Activated T-helper 2 cell treated with anti-CD3 and anti-CD28 coated beads, Interferon-gamma antibody, Interleukin-2, Interleukin-4, amounts not matched to agents 10 μg/mL and 5 μg/mL and 100 μg/mL, durations not matched to agents 14 hours and 24 hours and 36 hours (primary cell): ENCODE measurements at regions of chr2 and their contacts with region 1.

Region 1: GRCh38 chr2:172465417-172466334 is 38.3 kb downstream of the ITGA6 start:
- DNase-seq: peak; percentile 50
- H3K4me3 Mint-ChIP-seq: no peak overlapping the region
- H3K27ac Mint-ChIP-seq: no peak overlapping the region
- H3K4me1 Mint-ChIP-seq: peaks cover 48% of the 10 kb centered on the region
- H3K27me3 Mint-ChIP-seq: peaks cover 18% of the 10 kb centered on the region

Region 2: DNA sequence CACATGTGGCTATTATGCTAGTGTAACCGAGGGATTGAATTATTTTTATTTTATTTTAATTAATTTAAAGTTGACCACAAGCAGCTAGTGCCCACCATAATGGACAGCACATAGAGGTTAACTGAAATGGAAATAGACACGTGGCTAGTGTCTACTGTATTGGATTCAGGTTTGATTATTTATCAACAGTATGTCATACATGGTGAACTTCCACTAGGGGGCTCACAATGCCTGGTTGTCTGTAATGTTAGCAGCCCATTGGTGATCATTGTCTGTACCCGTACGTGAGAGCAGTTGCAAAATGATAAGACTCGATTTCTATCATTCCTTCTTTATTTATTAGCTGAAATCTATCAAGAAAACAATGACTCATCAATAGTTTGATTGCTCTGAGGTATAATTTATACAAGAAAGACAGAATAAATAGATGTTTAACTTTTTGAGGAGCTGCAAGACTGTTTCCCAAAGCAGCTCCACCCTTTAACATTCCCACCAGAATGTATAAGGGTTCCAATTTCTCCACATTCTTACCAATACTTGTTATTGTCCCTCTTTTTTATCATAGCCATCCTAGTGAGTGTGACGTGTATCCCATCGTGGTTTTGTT is 866.9 kb before region 1 on chr2:
- intact Hi-C with region 1: loop called (anchors 2 kb)
- DNase-seq: peak; percentile 15
- H3K4me3 Mint-ChIP-seq: no peak overlapping the region
- H3K27ac Mint-ChIP-seq: no peak overlapping the region
- H3K4me1 Mint-ChIP-seq: peaks cover 2% of the 10 kb centered on the region
- H3K27me3 Mint-ChIP-seq: peaks cover 19% of the 10 kb centered on the region

Region 3: GRCh38 chr2:172102391-172103278 is 363.0 kb before region 1 on chr2 and contains the start of gene DLX2:
- intact Hi-C with region 1: loop called (anchors 2 kb)
- DNase-seq: peak; percentile 54
- H3K4me3 Mint-ChIP-seq: peak within 1 kb of the TSS; percentile 77
- H3K27ac Mint-ChIP-seq: no peak within 1 kb of the TSS
- H3K4me1 Mint-ChIP-seq: peaks cover 42% of the 10 kb centered on the region
- H3K27me3 Mint-ChIP-seq: peaks cover 66% of the 10 kb centered on the region
- total RNA-seq, gene DLX2: 0.14 TPM in 1 of 2 replicates, not detected in the other

Region 4: DNA sequence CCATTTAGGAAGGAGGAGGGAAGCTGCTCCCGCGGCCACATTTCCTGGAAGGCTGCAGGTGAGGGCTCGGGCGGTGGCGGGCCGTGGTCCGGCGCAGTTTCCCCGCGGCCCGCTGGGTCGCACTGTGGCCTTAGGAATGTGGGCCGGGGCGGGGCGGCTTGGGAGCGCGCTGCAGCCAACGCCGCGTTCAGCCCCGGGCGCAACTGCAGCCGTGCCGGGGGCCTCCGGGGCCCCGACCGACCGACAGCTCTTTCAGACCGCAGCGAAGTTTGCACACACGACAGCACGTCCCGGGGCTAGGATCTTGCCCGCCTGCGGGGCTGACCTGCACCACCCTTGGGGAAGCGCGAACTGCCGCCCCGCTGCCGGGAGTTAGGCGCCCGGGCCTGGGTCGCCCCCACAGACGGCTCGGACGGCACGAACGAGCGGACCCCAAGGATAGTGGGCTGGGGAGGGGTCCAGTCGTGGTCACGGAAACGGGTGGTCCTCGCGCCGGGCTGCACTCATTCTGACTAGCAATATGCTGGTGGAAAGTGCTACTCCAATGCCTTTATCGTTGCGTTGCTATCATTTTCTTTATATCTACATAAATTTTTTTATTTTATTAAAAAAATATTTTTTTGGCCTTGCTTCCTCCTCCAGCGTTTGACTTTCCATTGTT is 293.0 kb before region 1 on chr2:
- intact Hi-C with region 1: loop called (anchors 1 kb)
- DNase-seq: peak; percentile 11
- H3K4me3 Mint-ChIP-seq: peak overlapping the region; percentile 38
- H3K27ac Mint-ChIP-seq: no peak overlapping the region
- H3K4me1 Mint-ChIP-seq: peaks cover 1% of the 10 kb centered on the region
- H3K27me3 Mint-ChIP-seq: peaks cover 33% of the 10 kb centered on the region

Region 5: DNA sequence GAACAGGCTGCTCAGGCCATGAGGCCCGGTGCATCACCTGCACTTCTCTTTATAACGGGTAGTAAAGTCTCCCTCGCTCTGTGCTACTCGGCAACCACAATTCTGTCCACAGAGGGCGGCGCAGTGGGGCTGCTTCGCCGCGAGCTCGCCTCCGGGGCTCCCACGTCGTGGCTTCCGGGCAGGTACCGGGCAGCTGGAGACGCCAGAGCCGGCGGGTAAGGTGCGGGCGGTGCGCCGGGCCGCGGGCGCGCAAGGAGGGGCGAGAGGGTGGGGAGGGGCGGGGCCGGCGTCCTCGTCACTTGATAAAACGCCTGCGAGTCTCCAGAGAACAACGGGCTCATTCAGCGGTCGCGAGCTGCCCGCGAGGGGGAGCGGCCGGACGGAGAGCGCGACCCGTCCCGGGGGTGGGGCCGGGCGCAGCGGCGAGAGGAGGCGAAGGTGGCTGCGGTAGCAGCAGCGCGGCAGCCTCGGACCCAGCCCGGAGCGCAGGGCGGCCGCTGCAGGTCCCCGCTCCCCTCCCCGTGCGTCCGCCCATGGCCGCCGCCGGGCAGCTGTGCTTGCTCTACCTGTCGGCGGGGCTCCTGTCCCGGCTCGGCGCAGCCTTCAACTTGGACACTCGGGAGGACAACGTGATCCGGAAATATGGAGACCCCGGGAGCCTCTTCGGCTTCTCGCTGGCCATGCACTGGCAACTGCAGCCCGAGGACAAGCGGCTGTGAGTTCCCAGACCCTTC is 38.3 kb before region 1 on chr2 and contains the start of gene ITGA6:
- intact Hi-C with region 1: loop called (anchors 2 kb)
- DNase-seq: peak; percentile 42
- H3K4me3 Mint-ChIP-seq: peak within 1 kb of the TSS; percentile 67
- H3K27ac Mint-ChIP-seq: no peak within 1 kb of the TSS
- H3K4me1 Mint-ChIP-seq: peaks cover 11% of the 10 kb centered on the region
- H3K27me3 Mint-ChIP-seq: peaks cover 83% of the 10 kb centered on the region
- total RNA-seq, gene ITGA6: 0.11 and 0.25 TPM in 2 replicates

Region 6: GRCh38 chr2:172531309-172531708 is 65.6 kb after region 1 on chr2:
- intact Hi-C with region 1: no loop called
- DNase-seq: no peak
- H3K4me3 Mint-ChIP-seq: no peak overlapping the region
- H3K27ac Mint-ChIP-seq: no peak overlapping the region
- H3K4me1 Mint-ChIP-seq: no peaks in the 10 kb centered on the region
- H3K27me3 Mint-ChIP-seq: no peaks in the 10 kb centered on the region

Region 7: GRCh38 chr2:172710584-172711024 is 244.9 kb after region 1 on chr2:
- intact Hi-C with region 1: loop called (anchors 5 kb)
- DNase-seq: no peak
- H3K4me3 Mint-ChIP-seq: no peak overlapping the region
- H3K27ac Mint-ChIP-seq: no peak overlapping the region
- H3K4me1 Mint-ChIP-seq: peaks cover 1% of the 10 kb centered on the region
- H3K27me3 Mint-ChIP-seq: peaks cover 24% of the 10 kb centered on the region